ENCODE measurements at regions of chr15 and their contacts with region 1.

Region 1: DNA sequence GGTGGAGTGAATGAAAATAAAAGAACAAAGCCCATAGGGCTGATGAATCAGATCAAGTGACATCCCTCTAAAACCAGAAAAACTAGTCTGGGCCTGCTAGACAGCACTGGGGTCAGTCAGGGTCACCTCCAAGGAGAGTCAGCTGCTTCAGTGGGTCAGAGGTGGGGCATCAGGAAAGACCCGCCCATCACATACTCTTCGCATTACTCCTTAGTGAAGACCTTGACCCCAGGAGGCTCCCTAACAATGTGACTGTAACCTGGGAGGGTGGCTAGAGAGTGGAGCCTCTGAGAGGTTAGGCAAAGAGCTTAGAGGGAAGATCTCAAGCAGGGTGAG is 12.9 kb downstream of the PPCDC start:
- DNase-seq: no peak
- H3K4me3 Mint-ChIP-seq: no peak overlapping the region
- H3K27ac Mint-ChIP-seq: peak overlapping the region; percentile 70
- H3K4me1 Mint-ChIP-seq: peaks cover 62% of the 10 kb centered on the region
- H3K27me3 Mint-ChIP-seq: no peaks in the 10 kb centered on the region

Region 2: GRCh38 chr15:75061272-75061671 is 25.0 kb after region 1 on chr15:
- intact Hi-C with region 1: no loop called
- DNase-seq: no peak
- H3K4me3 Mint-ChIP-seq: no peak overlapping the region
- H3K27ac Mint-ChIP-seq: peak overlapping the region; percentile 69
- H3K4me1 Mint-ChIP-seq: peaks cover 46% of the 10 kb centered on the region
- H3K27me3 Mint-ChIP-seq: no peaks in the 10 kb centered on the region

Region 3: GRCh38 chr15:75073197-75073596 is 36.9 kb after region 1 on chr15:
- intact Hi-C with region 1: loop called (anchors 5 kb)
- DNase-seq: no peak
- H3K4me3 Mint-ChIP-seq: no peak overlapping the region
- H3K27ac Mint-ChIP-seq: no peak overlapping the region
- H3K4me1 Mint-ChIP-seq: peaks cover 56% of the 10 kb centered on the region
- H3K27me3 Mint-ChIP-seq: no peaks in the 10 kb centered on the region

Region 4: DNA sequence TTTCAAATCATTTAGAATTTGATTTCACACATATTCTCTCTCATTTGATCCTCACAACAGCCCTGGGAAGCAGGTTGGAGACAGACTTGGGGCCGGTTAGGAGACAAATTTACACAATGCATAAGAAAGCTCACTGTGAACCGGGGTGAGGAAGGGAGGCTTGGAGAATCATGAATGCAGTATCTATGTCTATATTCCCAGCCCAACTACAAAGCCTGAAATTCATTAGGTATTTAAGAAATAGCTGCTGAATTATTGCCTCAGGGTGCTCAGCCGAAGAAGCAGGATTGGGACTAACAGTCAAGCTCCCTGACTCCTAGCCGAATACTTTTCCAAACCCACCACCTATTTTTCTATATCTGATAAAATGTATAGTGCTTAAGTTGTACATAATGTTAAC is 213.4 kb after region 1 on chr15:
- intact Hi-C with region 1: no loop called
- DNase-seq: no peak
- H3K4me3 Mint-ChIP-seq: no peak overlapping the region
- H3K27ac Mint-ChIP-seq: no peak overlapping the region
- H3K4me1 Mint-ChIP-seq: no peaks in the 10 kb centered on the region
- H3K27me3 Mint-ChIP-seq: peaks cover 26% of the 10 kb centered on the region